ENCODE measurements at regions of chr6 and their contacts with region 1.

Region 1: GRCh38 chr6:75526502-75527127 is 33.0 kb upstream of the FILIP1 start:
- DNase-seq: peak; percentile 27
- H3K4me3 Mint-ChIP-seq: no peak overlapping the region
- H3K27ac Mint-ChIP-seq: no peak overlapping the region
- H3K4me1 Mint-ChIP-seq: no peaks in the 10 kb centered on the region
- H3K27me3 Mint-ChIP-seq: peaks cover 32% of the 10 kb centered on the region

Region 2: DNA sequence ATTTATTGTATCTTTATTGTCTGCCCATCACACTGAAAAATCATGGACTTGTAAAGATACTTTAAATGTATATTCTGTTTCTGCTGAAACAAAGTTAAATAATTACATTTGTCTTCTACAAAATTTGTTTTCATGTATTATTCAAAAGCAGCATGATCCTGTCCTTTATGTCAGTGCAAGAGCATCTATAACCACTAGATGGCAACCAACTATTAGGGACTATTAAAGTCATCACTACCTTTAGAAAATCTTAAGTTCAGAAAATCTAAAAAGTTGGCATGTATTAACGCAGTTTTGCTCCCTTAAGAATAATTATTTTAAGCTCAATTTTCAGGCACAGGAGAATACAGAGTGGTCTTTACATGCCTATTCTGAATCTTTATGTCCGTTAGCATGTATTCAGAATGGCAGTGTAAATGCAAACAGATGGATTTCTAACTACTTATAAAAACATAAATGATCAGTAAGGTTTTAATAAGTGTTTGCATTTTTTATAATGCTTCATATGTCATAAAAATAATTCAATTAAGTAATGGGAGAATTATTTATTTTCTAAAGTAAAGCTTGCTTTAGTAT is 259.8 kb before region 1 on chr6:
- intact Hi-C with region 1: loop called (anchors 1 kb)
- DNase-seq: no peak
- H3K4me3 Mint-ChIP-seq: no peak overlapping the region
- H3K27ac Mint-ChIP-seq: no peak overlapping the region
- H3K4me1 Mint-ChIP-seq: peaks cover 41% of the 10 kb centered on the region
- H3K27me3 Mint-ChIP-seq: no peaks in the 10 kb centered on the region

Region 3: DNA sequence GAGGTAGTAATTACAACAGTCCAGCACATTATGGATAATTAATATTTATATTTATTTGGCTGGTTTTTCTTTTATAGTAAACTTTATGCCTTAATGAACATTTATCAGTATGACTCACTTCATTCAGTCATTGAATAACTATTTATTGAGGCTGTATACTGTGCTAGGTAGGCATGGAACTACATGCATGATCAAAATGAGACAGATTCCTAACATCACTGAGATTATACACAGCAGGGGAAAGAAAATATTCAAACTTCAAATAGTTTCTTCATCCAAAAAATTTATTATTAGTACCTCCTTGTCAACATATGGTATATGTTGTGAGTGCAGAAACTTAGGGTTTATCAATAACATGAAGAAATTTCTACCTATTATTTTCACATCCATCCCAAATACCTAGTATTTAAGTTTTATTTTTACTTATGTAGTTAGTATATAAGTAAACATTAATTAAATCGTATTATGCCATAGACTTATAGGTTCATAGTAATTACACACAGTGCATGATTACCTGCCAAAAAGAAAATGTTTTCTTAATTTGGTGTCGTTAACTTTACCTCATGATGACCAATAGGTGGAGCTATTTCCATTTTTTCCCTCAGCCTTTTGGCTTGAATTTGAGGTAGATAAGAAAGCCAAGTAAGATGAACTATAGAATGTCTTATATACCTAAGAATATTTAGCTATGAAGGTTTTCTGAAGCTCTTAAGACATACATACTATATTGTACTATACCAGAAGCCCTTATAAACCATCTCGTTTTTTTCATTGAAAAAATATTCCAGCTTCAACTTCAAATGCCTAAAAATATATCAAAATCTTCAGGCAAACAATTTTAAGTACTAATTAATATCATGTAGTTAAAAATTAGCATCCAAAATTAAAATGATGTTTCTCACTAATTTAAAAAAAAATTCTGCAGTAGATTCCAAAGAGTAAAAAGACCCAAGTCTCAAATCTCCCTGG is 229.5 kb before region 1 on chr6:
- intact Hi-C with region 1: loop called (anchors 1 kb)
- DNase-seq: no peak
- H3K4me3 Mint-ChIP-seq: no peak overlapping the region
- H3K27ac Mint-ChIP-seq: no peak overlapping the region
- H3K4me1 Mint-ChIP-seq: no peaks in the 10 kb centered on the region
- H3K27me3 Mint-ChIP-seq: no peaks in the 10 kb centered on the region

Region 4: DNA sequence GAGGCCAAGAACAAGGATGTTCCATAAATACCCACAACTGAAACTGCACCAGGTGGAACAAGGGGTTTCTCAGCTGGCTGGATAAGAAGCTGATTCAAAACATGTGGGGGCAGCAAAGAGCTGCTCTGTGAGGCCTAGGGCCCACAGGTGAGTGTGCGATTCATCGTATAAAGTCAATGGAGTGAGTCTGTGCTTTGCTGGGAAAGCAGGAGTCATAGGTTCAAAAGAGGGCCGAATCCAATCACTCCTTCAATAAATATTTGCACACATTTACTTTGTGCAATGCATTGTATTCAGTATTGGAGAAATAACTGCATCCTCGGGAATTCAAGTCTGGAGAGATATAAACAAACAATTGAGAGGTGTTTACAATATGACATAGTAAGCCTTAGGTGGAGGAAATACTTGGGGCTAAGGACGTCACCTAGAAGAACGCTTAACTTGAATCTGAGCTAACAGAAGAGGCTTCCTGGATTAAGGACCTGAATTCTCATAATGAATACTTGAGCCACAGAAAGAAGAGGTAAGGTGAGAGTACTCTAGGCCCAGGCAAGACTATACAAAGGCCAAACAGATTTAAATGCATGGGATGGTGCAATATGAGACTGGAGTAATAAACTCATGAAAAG is 158.3 kb before region 1 on chr6:
- intact Hi-C with region 1: loop called (anchors 1 kb)
- DNase-seq: no peak
- H3K4me3 Mint-ChIP-seq: no peak overlapping the region
- H3K27ac Mint-ChIP-seq: no peak overlapping the region
- H3K4me1 Mint-ChIP-seq: no peaks in the 10 kb centered on the region
- H3K27me3 Mint-ChIP-seq: peaks cover 3% of the 10 kb centered on the region

Region 5: GRCh38 chr6:75493400-75494064 is 33.1 kb before region 1 on chr6 and contains the start of gene FILIP1:
- intact Hi-C with region 1: loop called (anchors 1 kb)
- DNase-seq: no peak
- H3K4me3 Mint-ChIP-seq: no peak within 1 kb of the TSS
- H3K27ac Mint-ChIP-seq: no peak within 1 kb of the TSS
- H3K4me1 Mint-ChIP-seq: peaks cover 33% of the 10 kb centered on the region
- H3K27me3 Mint-ChIP-seq: peaks cover 53% of the 10 kb centered on the region
- total RNA-seq, gene FILIP1: not detected in 2 replicates

Region 6: DNA sequence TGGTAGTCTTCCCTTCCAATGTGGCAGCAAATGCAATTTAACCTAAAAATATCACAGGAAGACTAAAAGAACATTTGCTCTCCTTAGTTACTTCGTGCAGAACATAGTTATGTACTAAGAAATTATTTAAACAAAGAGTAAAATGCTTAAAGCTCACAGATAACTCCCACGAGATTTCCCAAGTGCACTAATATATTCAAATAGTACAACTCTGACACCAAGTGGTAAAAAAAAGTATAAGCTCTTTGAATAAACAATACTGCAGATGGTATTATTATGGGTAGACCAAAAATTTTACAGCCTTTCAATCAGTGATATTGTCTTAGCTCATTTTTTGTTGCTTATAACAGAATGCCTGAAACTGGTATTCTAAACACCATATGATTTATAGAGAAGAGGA is 19.8 kb after region 1 on chr6:
- intact Hi-C with region 1: no loop called
- DNase-seq: no peak
- H3K4me3 Mint-ChIP-seq: no peak overlapping the region
- H3K27ac Mint-ChIP-seq: no peak overlapping the region
- H3K4me1 Mint-ChIP-seq: peaks cover 6% of the 10 kb centered on the region
- H3K27me3 Mint-ChIP-seq: peaks cover 7% of the 10 kb centered on the region

Measured in activated T-helper 1 cell treated with anti-CD3 and anti-CD28 coated beads, Interleukin-12 subunit alpha, Interleukin-12 subunit beta, Interleukin-2, Interleukin-4 antibody, amounts not matched to agents 30 ng/mL and 10 ng/mL and 1 ng/mL, durations not matched to agents 14 hours and 24 hours and 36 hours (primary cell).